Breast epithelium (tissue), 4 donors: ENCODE measurements at regions of chr20 and their contacts with region 1.

Region 1: DNA sequence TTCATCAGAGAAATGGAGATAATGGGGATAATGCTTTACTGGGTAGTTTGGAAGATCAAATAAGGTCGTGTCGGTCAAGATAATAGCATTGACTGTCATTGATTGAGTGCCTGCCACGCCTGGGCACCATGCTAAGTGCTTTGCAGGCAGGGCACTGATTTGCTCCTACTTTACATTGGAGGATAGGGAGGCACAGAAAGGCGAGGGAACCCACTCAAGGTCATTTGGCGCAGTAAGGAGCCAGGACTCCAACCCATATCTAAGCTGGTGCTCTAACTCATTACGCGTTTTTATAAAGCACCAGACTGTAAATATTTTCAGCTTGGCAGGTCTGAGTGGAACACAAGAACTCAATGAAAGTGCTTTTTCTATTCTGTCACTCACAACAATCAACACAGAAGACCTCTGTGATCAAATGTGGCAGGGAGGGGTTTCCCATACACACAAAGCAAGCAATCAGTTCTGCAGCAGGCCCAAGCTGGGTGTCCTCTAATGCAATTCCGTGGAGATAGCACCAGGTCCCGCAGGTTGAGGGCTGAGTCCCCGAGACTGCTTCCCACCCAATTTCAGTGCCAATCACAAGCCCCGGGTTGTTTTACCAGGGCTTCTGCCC is 373.6 kb downstream of the CDH26 start:
- DNase-seq: no peak
- H3K4me3 ChIP-seq: no peak overlapping the region
- H3K27ac ChIP-seq: peak overlapping the region; percentile 19 to 59
- H3K4me1 ChIP-seq: no peaks in the 10 kb centered on the region
- H3K27me3 ChIP-seq: no peaks in the 10 kb centered on the region
- CTCF ChIP-seq: no peak
- POLR2A ChIP-seq: no peak

Region 2: DNA sequence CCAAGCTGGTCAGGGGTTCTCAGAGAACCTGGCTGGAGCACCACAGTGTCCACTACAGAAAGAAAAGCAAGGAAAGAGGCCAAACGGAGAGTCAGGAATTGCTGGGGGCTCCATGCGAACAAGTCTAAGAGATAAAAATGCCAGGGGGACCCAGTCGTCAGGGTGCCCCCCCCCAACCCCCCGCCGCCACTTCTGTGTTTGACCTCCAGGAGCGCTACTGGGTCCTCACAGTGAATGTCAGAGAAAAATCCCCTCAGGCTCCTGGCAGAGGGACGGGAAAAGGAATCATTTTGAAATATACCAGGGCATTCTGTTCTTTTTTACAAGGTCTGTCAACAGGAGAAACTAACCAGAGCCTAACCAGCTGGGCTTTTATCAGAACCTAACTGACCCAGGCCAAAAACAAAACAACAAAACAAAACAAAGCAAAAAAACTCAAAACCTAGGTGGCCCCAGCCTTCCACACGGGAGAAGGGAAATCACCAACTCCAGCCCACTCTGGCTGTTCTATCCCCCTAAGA is 1368.7 kb before region 1 on chr20:
- intact Hi-C with region 1: no loop called
- DNase-seq: no peak
- H3K4me3 ChIP-seq: no peak overlapping the region
- H3K27ac ChIP-seq: no peak overlapping the region
- H3K4me1 ChIP-seq: no peaks in the 10 kb centered on the region
- H3K27me3 ChIP-seq: no peaks in the 10 kb centered on the region
- CTCF ChIP-seq: no peak
- POLR2A ChIP-seq: no peak

Region 3: GRCh38 chr20:60313607-60314006 is 18.2 kb before region 1 on chr20:
- intact Hi-C with region 1: loop called (anchors 1 kb)
- DNase-seq: no peak
- H3K4me3 ChIP-seq: no peak overlapping the region
- H3K27ac ChIP-seq: no peak overlapping the region
- H3K4me1 ChIP-seq: no peaks in the 10 kb centered on the region
- H3K27me3 ChIP-seq: no peaks in the 10 kb centered on the region
- CTCF ChIP-seq: no peak
- POLR2A ChIP-seq: no peak

Region 4: GRCh38 chr20:60358101-60358500 is 26.3 kb after region 1 on chr20:
- intact Hi-C with region 1: loop called (anchors 1 kb)
- DNase-seq: no peak
- H3K4me3 ChIP-seq: no peak overlapping the region
- H3K27ac ChIP-seq: no peak overlapping the region
- H3K4me1 ChIP-seq: no peaks in the 10 kb centered on the region
- H3K27me3 ChIP-seq: no peaks in the 10 kb centered on the region
- CTCF ChIP-seq: no peak
- POLR2A ChIP-seq: no peak